ENCODE measurements at regions of chr15 and their contacts with region 1.

Region 1: GRCh38 chr15:74438721-74439316 is 5.1 kb upstream of the SEMA7A start:
- DNase-seq: peak; percentile 88
- ATAC-seq: peak; percentile 72
- H3K4me3 Mint-ChIP-seq: no peak overlapping the region
- H3K27ac Mint-ChIP-seq: no peak overlapping the region
- H3K4me1 Mint-ChIP-seq: peaks cover 55% of the 10 kb centered on the region
- H3K27me3 Mint-ChIP-seq: no peaks in the 10 kb centered on the region

Region 2: GRCh38 chr15:74453925-74454763 is 15.3 kb after region 1 on chr15:
- CTCF ChIA-PET with region 1: interaction called, 22 read pairs
- POLR2A ChIA-PET with region 1: interaction called, 3 read pairs
- DNase-seq: no peak
- ATAC-seq: peak; percentile 90
- H3K4me3 Mint-ChIP-seq: peak overlapping the region; percentile 25
- H3K27ac Mint-ChIP-seq: peak overlapping the region; percentile 82
- H3K4me1 Mint-ChIP-seq: peaks cover 43% of the 10 kb centered on the region
- H3K27me3 Mint-ChIP-seq: no peaks in the 10 kb centered on the region

Region 3: DNA sequence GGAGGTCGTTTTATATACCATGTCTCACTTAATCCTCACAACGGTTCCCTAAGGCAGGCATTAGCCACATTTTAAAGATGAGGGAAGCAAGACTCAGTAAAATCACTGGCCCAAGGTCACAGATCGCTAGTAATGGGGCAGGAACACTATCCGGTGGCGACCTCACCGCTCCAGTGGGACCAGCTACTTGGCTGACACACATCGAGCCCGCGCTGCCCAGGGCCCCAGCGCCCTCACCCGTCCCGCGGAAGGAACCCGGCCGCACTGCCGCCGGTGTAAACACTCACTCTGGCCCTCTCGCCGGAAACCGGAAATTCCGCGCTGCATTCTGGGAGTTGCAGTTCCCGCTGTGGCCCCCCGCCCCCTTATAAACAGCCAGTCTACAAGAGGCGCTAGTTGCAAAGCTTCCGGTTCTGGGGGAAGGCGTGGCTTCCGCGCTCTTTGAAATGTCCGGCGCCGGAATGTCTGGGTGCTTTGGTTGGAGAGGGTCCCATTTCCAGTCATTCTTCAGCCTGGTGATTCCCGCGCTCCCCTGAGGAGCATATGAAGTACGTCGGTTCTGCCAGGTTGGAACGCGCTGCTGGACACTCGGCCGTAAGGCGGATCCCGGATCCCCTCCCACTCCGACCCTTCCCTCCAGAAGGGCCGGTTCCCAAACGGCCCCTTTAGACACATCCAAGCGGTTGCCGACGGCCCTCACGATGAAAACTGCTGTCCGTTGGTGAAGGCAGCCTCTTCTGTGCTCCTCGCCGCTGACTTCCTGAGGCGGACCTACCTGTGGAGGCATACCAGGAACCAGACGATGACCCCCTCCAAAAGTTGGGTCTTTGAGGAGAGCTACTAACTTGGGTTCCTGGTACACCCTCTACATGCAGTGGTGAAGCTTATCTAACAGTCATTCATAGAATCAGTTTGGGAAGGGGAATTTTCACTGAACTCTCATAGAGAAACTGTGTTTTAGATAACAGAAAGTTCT is 22.3 kb after region 1 on chr15 and contains the start of gene UBL7:
- CTCF ChIA-PET with region 1: interaction called, 4 read pairs
- POLR2A ChIA-PET with region 1: interaction called, 11 read pairs
- DNase-seq: peak; percentile 99
- ATAC-seq: peak; percentile 95
- H3K4me3 Mint-ChIP-seq: peak within 1 kb of the TSS; percentile 89
- H3K27ac Mint-ChIP-seq: peak within 1 kb of the TSS; percentile 81
- H3K4me1 Mint-ChIP-seq: peaks cover 54% of the 10 kb centered on the region
- H3K27me3 Mint-ChIP-seq: no peaks in the 10 kb centered on the region
- total RNA-seq, gene UBL7: 60.8 to 71.4 TPM

Region 4: GRCh38 chr15:74598126-74598842 is 159.5 kb after region 1 on chr15:
- CTCF ChIA-PET with region 1: no interaction called
- POLR2A ChIA-PET with region 1: no interaction called
- DNase-seq: peak; percentile 92
- ATAC-seq: peak; percentile 99
- H3K4me3 Mint-ChIP-seq: peak overlapping the region; percentile 96
- H3K27ac Mint-ChIP-seq: peak overlapping the region; percentile 97
- H3K4me1 Mint-ChIP-seq: peaks cover 23% of the 10 kb centered on the region
- H3K27me3 Mint-ChIP-seq: no peaks in the 10 kb centered on the region